CD8-positive, alpha-beta memory T cell (primary cell): ENCODE measurements at regions of chr11 and their contacts with region 1.

Region 1: DNA sequence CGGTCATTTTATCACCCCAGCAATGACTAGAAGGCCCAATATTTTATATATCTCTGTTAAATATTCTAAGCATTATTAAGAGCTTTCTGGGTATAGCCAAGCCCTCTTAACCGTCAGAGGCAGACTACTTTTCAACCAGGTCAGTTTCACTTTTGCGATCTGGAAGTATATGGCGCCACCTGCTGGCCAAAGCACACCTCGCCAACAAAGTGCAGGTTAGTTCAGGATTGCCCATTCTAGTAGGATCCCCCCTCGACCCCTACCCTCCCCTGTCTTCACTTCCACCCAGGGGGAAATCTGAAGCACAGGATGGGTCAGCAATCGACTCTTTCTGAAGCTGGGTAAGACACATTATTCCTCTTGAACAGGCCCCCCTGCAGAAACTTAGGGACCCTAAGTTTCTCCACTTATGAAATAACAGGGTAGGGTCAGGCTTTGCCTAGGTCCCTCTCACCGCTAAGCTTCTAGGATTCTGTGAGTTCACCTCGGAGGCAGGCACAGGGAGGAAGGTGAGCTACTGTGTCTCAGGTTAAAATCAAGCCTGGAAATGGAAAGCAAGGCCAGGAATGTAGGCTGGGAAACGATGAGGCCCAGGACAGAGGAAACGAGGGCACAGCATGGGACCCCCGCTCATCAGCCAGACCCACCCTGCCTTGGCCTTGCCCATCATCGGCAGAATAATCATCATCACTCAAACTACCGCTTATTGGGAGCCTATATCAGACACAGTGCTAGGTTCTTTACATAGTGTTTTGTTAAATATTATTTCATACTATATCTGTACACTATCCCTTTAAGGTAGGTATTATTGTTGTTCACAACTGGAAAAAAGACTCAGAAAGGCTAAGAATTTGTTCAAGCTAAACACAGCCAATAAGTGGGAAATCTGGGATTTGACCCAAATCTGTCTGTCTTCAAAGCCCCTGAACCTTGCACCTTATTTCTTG is 35.6 kb downstream of the KCNJ1 start:
- DNase-seq: peak; percentile 75 to 89 (median 80)
- H3K4me3 ChIP-seq: peak overlapping the region; percentile 4
- H3K4me3 Mint-ChIP-seq: peak overlapping the region; percentile 69 to 89 (median 72)
- H3K27ac ChIP-seq: peak overlapping the region; percentile 57
- H3K27ac Mint-ChIP-seq: peak overlapping the region; percentile 74 to 98 (median 92)
- H3K4me1 ChIP-seq: peaks cover 13% of the 10 kb centered on the region
- H3K4me1 Mint-ChIP-seq: peaks cover 21 to 39% (median 36%) of the 10 kb centered on the region in 3 donors
- H3K27me3 ChIP-seq: no peaks in the 10 kb centered on the region
- H3K27me3 Mint-ChIP-seq: no peaks in the 10 kb centered on the region

Region 2: DNA sequence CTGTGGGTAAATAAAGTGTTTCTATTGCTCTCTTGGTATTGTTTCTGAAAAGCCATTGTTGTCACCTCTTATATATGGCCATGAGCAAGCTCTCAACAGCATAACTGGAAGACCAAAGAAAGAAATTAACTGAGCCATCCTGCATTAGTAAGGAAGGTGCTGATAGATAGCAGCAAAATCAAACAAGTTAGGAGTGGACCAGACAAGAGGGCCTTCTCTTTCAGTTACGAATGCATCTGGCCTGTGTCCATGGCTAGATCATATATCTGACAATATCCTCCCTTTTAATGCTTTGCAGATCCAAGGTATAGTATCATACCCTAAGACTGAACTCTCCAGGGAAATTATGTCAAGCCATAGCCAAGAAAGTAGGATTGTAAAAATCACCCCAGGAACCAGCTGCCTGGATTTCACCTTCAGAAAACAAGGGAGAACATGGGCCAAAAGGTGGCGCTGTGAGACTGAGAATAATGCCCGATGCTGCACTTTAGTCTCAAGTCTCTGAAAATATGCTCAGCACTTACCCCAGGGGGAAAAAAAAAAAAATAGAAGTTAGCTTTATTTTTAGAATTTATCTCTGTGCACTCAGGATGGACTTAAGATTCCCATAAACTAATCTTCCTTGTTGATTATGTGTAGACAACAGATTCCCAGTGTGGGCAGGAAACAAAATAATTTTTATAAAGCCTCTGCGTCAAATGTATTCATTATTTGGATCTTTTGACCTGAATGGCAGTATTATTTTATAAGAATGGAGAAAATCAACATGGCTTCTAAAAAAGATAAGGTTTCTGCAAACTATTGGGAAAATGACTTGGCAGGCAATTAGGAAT is 659.2 kb before region 1 on chr11:
- CTCF ChIA-PET with region 1: interaction called, 57 read pairs
- POLR2A ChIA-PET with region 1: interaction called, 7 read pairs
- DNase-seq: peak; percentile 67 to 86 (median 76)
- H3K4me3 ChIP-seq: no peak overlapping the region
- H3K4me3 Mint-ChIP-seq: no peak overlapping the region
- H3K27ac ChIP-seq: no peak overlapping the region
- H3K27ac Mint-ChIP-seq: peak overlapping the region in 2 of 8 donors; percentile 57 to 90
- H3K4me1 ChIP-seq: no peaks in the 10 kb centered on the region
- H3K4me1 Mint-ChIP-seq: peaks cover 0 to 6% (median 3%) of the 10 kb centered on the region in 3 donors
- H3K27me3 ChIP-seq: no peaks in the 10 kb centered on the region
- H3K27me3 Mint-ChIP-seq: no peaks in the 10 kb centered on the region

Region 3: DNA sequence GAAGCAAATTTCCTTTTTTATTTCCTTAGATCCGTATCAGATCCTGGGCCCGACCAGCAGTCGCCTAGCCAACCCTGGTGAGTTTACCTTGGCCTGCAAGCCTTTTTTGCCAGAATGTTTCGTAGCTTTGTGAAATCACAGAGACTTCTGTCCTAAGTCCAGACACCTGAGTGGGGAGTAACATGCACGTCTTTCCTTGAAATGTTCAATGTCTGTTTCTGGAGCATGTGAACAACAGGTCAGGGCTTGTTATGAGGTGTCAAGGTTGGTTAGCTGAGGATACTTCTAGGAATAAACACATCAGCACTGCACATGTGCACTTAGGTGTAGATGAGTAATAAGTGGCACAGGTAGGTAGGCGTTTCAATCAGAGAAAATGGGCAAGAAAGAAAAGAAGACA is 22.3 kb before region 1 on chr11:
- CTCF ChIA-PET with region 1: interaction called, 10 read pairs
- POLR2A ChIA-PET with region 1: no interaction called
- DNase-seq: no peak
- H3K4me3 ChIP-seq: no peak overlapping the region
- H3K4me3 Mint-ChIP-seq: no peak overlapping the region
- H3K27ac ChIP-seq: no peak overlapping the region
- H3K27ac Mint-ChIP-seq: peak overlapping the region in 3 of 8 donors; percentile 7 to 90 (median 29)
- H3K4me1 ChIP-seq: no peaks in the 10 kb centered on the region
- H3K4me1 Mint-ChIP-seq: peaks cover 13 to 49% (median 35%) of the 10 kb centered on the region in 3 donors
- H3K27me3 ChIP-seq: no peaks in the 10 kb centered on the region
- H3K27me3 Mint-ChIP-seq: no peaks in the 10 kb centered on the region

Region 4: DNA sequence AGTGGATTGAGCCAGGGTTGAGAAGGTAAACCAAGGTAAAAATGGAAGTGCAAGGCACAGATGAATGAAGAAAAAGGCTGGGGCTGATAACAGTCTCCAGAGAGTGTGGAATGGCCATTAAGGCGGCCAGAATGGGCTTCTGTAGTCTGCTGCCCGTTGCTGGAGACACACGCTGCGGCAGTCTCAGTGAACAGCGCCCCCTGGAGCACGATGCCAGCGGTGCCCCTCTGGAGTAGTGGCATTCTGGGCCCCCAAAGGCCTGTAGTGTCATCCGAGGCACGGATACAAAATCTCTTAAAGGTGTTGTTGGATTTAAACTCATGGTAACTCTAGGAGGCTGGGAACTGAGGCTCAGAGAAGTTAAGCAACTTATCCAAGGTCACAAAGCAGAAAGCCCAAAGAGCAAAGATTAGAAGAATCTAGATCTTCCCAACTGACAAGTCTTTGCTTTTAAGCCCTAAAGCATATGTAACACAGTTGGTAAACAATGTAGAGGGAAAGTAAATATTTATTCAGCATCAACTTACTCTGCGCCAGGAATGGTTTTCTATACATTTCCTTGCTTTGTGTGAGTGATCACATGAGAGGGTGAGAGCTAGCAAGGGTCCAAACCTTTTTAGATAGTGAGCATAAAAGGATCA is 17.5 kb after region 1 on chr11:
- CTCF ChIA-PET with region 1: interaction called, 27 read pairs
- POLR2A ChIA-PET with region 1: no interaction called
- DNase-seq: peak; percentile 33 to 77 (median 60)
- H3K4me3 ChIP-seq: no peak overlapping the region
- H3K4me3 Mint-ChIP-seq: peak overlapping the region in 1 of 7 donors; percentile 12
- H3K27ac ChIP-seq: no peak overlapping the region
- H3K27ac Mint-ChIP-seq: peak overlapping the region in 2 of 8 donors; percentile 40
- H3K4me1 ChIP-seq: peaks cover 27% of the 10 kb centered on the region
- H3K4me1 Mint-ChIP-seq: peaks cover 19 to 43% (median 38%) of the 10 kb centered on the region in 3 donors
- H3K27me3 ChIP-seq: no peaks in the 10 kb centered on the region
- H3K27me3 Mint-ChIP-seq: peaks cover 0 to 4% of the 10 kb centered on the region in 2 donors

Region 5: DNA sequence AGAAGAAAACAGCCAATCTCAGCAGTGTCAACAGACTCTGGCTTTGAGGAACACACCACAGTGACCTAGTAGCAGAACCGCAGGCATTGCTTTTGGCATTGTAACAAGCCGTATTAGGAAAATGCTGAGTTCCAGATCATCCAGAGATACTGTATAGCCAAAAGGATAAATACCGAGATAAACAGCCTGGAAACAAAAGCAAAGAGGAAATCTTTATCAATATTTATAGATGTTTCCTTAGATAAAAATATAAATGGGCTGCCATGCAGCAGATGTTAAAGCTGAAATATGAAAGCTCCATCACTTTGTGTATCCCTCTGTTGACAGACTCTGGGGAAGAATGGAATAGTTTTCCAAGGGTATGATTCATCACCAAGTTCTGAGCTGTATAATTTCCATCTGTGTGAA is 210.2 kb after region 1 on chr11:
- CTCF ChIA-PET with region 1: no interaction called
- POLR2A ChIA-PET with region 1: no interaction called
- DNase-seq: no peak
- H3K4me3 ChIP-seq: no peak overlapping the region
- H3K4me3 Mint-ChIP-seq: no peak overlapping the region
- H3K27ac ChIP-seq: no peak overlapping the region
- H3K27ac Mint-ChIP-seq: no peak overlapping the region
- H3K4me1 ChIP-seq: no peaks in the 10 kb centered on the region
- H3K4me1 Mint-ChIP-seq: no peaks in the 10 kb centered on the region
- H3K27me3 ChIP-seq: no peaks in the 10 kb centered on the region
- H3K27me3 Mint-ChIP-seq: peaks cover 0 to 4% of the 10 kb centered on the region in 2 donors

Region 6: GRCh38 chr11:129061466-129062194 is 230.2 kb after region 1 on chr11:
- CTCF ChIA-PET with region 1: no interaction called
- POLR2A ChIA-PET with region 1: no interaction called
- DNase-seq: no peak
- H3K4me3 ChIP-seq: no peak overlapping the region
- H3K4me3 Mint-ChIP-seq: no peak overlapping the region
- H3K27ac ChIP-seq: no peak overlapping the region
- H3K27ac Mint-ChIP-seq: no peak overlapping the region
- H3K4me1 ChIP-seq: no peaks in the 10 kb centered on the region
- H3K4me1 Mint-ChIP-seq: no peaks in the 10 kb centered on the region
- H3K27me3 ChIP-seq: no peaks in the 10 kb centered on the region
- H3K27me3 Mint-ChIP-seq: peaks cover 0 to 12% of the 10 kb centered on the region in 2 donors